A549 (cell line): ENCODE measurements at regions of chr2 and their contacts with region 1.

Region 1: GRCh38 chr2:47357483-47357882 is 45.5 kb upstream of the MSH2 start:
- DNase-seq: peak in 1 of 2 experiments; percentile 56
- ATAC-seq: no peak
- H3K4me3 ChIP-seq: no peak overlapping the region
- H3K27ac ChIP-seq: peak overlapping the region; percentile 5 to 65; a peak in 4 of 6 replicates
- H3K4me1 ChIP-seq: peaks cover 57% of the 10 kb centered on the region
- CTCF ChIP-seq: no peak
- EP300 ChIP-seq: no peak
- POLR2A ChIP-seq: no peak
- RAD21 ChIP-seq: no peak

Region 2: DNA sequence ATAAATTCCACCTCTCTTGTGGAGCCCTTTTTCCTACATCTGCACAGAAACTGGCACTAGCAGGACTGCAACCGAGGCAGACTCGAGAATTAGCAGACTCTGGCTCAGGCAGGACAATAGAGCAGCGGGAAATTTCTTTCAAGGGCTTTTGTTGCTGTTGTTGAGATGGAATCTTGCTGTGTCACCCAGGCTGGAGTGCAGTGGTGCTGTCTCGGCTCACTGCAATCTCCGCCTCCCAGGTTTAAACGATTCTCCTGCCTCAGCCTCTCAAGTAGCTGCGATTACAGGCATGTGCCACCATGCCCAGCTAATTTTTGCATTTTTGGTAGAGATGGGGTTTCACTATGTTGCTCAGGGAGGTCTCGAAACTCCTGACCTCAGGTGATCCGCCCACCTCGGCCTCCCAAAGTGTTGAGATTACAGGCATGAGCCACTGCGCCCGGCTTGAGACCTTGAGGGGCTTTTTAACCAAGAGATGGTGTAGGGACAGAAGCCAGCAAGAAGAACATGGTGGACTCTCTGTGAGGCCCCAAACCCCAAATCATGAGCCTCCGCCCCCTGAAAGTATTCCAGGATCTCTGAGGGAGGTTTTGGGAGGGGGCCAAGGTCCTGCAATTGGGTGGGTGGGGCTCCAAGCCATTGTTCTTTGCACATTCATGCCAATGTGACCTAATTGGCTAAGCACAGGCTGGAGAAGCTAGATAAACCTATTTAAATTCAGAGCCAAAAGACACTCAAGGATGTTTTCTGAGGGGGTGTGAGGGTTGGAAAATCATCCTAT is 22.9 kb before region 1 on chr2:
- CTCF ChIA-PET with region 1: interaction called, 31 read pairs
- POLR2A ChIA-PET with region 1: no interaction called
- DNase-seq: no peak
- ATAC-seq: peak in 1 of 2 experiments; percentile 32; a peak in 4 of 6 replicates
- H3K4me3 ChIP-seq: no peak overlapping the region
- H3K27ac ChIP-seq: peak overlapping the region in 1 of 2 experiments; percentile 57; a peak in 3 of 6 replicates
- H3K4me1 ChIP-seq: peaks cover 9% of the 10 kb centered on the region; the same call in 2 of the 3 replicates
- CTCF ChIP-seq: no peak
- EP300 ChIP-seq: no peak
- POLR2A ChIP-seq: no peak
- RAD21 ChIP-seq: no peak

Region 3: DNA sequence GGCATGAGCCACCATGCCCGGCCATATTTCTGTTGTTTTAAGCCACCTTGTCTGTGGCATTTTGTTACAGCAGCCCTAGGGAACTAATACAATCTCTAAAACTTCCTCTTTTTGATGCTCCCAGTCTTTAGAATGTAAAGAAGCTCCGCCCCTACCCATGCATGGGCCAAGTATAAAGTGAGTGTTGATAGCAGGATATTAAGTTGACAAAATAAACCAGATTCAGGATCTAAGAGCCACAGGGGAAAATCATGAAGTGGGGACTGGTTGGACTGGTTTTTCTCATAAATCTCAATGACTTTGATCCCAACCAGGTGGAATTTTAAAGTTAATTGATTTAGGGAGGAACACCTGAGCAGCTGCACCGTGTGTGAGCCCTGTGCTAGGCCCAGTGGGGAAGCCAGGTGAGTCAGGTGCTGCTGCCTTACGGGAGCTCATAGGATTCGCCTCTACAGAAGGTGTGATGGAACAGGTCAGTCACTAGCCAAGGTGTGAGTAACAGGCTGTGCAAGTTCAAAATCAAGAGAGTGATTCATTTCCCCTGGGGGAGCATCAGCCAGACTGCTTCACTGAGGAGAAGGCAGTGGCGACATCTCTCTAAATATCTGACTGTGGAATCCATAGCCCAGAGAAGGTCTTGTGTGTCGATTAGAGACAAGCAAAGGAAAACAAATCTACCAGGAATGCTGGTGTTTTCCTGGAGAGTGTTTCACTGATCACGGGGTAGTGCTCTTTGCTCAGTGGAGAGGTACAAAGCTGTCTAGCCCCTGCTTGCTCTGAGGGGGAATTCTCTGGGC is 17.5 kb before region 1 on chr2:
- CTCF ChIA-PET with region 1: interaction called, 31 read pairs
- POLR2A ChIA-PET with region 1: interaction called, 25 read pairs
- DNase-seq: peak in 1 of 2 experiments; percentile 59
- ATAC-seq: peak; percentile 15 to 54; a peak in 5 of 6 replicates
- H3K4me3 ChIP-seq: no peak overlapping the region
- H3K27ac ChIP-seq: peak overlapping the region; percentile 12 to 74; a peak in 4 of 6 replicates
- H3K4me1 ChIP-seq: peaks cover 27% of the 10 kb centered on the region
- CTCF ChIP-seq: no peak
- EP300 ChIP-seq: no peak
- POLR2A ChIP-seq: no peak
- RAD21 ChIP-seq: no peak

Region 4: DNA sequence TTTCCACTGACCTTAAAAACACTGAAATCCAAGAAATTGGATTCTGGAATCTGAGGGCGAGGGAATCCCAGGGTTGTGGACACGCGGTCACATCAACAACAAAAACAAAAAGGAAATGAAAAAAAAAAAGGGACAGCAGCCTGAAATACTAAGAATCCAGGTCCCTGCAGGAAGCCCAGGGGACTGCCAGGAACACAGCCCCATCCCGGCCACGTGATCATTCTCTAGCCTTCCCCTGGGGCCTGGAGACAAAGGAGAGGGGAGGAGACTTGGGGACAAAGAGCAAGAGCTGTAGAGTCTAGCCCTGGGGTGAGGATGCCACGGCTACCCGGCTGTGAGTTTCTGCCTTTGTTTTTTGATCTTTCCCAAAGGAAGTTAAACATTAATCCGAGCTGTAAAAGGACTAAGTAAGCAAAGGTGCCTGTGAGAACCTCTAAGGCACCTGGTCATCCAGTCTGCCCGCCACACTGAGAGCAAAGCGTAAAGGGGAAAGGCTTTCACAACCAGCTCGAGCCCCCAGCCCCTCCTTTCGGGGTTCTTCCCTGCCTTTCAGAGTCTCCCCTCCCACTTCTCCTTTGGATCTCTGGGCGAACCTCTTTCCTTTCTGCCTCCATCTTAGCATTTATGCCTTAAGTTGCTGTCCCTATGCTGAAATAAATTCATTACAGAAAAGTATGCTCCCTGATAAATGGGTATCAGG is 12.4 kb before region 1 on chr2:
- CTCF ChIA-PET with region 1: interaction called, 5 read pairs
- POLR2A ChIA-PET with region 1: interaction called, 25 read pairs
- DNase-seq: peak; percentile 99
- ATAC-seq: peak; percentile 99
- H3K4me3 ChIP-seq: peak overlapping the region; percentile 44
- H3K27ac ChIP-seq: peak overlapping the region; percentile 82 to 93
- H3K4me1 ChIP-seq: peaks cover 42% of the 10 kb centered on the region
- CTCF ChIP-seq: no peak
- EP300 ChIP-seq: no peak
- POLR2A ChIP-seq: peak; percentile 37
- RAD21 ChIP-seq: peak in 1 of 2 experiments; percentile 10; a peak in 1 of 5 replicates

Region 5: GRCh38 chr2:47520825-47521665 is 163.6 kb after region 1 on chr2:
- CTCF ChIA-PET with region 1: no interaction called
- POLR2A ChIA-PET with region 1: no interaction called
- DNase-seq: peak; percentile 69 to 83
- ATAC-seq: peak; percentile 83 to 86
- H3K4me3 ChIP-seq: peak overlapping the region; percentile 54
- H3K27ac ChIP-seq: peak overlapping the region; percentile 43 to 79; a peak in 5 of 6 replicates
- H3K4me1 ChIP-seq: peaks cover 9% of the 10 kb centered on the region
- CTCF ChIP-seq: peak; percentile 62
- EP300 ChIP-seq: no peak
- POLR2A ChIP-seq: peak; percentile 16; the same call in 1 of the 2 replicates
- RAD21 ChIP-seq: peak; percentile 42 to 58; a peak in 4 of 5 replicates